Aorta (tissue), 5 donors: ENCODE measurements at regions of chr3 and their contacts with region 1.

Region 1: DNA sequence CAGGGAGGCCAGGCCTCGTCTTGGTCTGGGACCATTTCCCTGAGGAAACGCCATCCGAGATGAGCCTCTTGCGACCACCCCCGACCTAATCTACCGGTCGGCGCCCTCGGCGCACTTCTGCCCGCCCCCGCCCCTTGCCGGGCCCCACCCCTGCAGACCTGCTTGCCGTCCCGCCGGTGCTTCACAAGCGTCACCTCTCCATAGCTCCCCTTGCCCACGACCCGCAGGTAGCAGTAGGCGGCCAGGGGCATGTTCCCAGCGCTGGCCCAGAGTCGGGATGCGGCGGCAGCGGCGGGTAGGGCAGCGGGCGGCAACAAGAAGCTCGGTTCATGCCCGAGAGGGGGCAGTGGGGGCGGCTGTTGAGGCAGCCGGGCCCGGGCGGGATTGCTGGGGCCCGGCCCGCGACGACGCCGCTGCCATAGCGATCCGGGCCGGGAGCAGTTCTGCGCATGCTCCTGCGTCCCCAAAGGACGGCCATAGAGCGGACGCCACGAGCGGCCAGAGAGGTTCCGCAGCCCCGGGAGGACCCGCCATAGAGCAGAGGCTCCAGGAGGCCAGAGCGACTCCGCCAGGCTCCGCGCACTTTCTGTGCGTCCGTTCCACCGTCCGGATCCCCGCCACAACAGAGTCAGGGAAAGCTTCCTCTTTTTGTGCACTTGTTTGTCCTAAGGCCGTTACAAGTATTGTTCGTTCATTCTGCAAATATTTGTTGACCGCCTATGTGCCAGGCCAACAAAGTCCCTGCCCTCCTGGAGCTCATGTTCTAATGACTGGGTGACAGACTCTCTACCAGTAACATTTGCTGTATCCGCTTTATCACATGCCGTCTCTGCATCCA is at the start of gene NEK4:
- DNase-seq: peak; percentile 96 to 97
- ATAC-seq: peak; percentile 98
- H3K4me3 ChIP-seq: peak within 1 kb of the TSS; percentile 84 to 89
- H3K27ac ChIP-seq: peak within 1 kb of the TSS in 1 of 2 donors; percentile 64
- H3K4me1 ChIP-seq: peaks cover 0 to 3% of the 10 kb centered on the region in 2 donors
- H3K27me3 ChIP-seq: no peaks in the 10 kb centered on the region
- total RNA-seq, gene NEK4: 21.7 to 22.1 TPM

Region 2: GRCh38 chr3:52705688-52706686 is 64.7 kb before region 1 on chr3 and contains the starts of genes GLT8D1 and SPCS1:
- intact Hi-C with region 1: no loop called
- DNase-seq: peak; percentile 91 to 95
- ATAC-seq: peak; percentile 97
- H3K4me3 ChIP-seq: peak within 1 kb of the TSS; percentile 41 to 61
- H3K27ac ChIP-seq: peak within 1 kb of the TSS; percentile 19 to 76
- H3K4me1 ChIP-seq: peaks cover 0 to 3% of the 10 kb centered on the region in 2 donors
- H3K27me3 ChIP-seq: no peaks in the 10 kb centered on the region
- total RNA-seq, gene GLT8D1: 28.7 to 48.4 TPM
- total RNA-seq, gene SPCS1: 57.2 to 67.5 TPM

Region 3: GRCh38 chr3:52831500-52832301 is 61.0 kb after region 1 on chr3:
- intact Hi-C with region 1: loop called in 1 of 2 experiments (anchors 5 kb)
- DNase-seq: peak; percentile 86 to 91
- ATAC-seq: peak; percentile 79
- H3K4me3 ChIP-seq: no peak overlapping the region
- H3K27ac ChIP-seq: peak overlapping the region; percentile 77 to 91
- H3K4me1 ChIP-seq: peaks cover 4 to 6% of the 10 kb centered on the region in 2 donors
- H3K27me3 ChIP-seq: no peaks in the 10 kb centered on the region

Region 4: GRCh38 chr3:53150247-53151085 is 379.8 kb after region 1 on chr3:
- intact Hi-C with region 1: no loop called
- DNase-seq: peak; percentile 56 to 59
- ATAC-seq: no peak
- H3K4me3 ChIP-seq: no peak overlapping the region
- H3K27ac ChIP-seq: no peak overlapping the region
- H3K4me1 ChIP-seq: no peaks in the 10 kb centered on the region
- H3K27me3 ChIP-seq: no peaks in the 10 kb centered on the region